Sigmoid colon (tissue), 7 donors: ENCODE measurements at regions of chr6 and their contacts with region 1.

Region 1: DNA sequence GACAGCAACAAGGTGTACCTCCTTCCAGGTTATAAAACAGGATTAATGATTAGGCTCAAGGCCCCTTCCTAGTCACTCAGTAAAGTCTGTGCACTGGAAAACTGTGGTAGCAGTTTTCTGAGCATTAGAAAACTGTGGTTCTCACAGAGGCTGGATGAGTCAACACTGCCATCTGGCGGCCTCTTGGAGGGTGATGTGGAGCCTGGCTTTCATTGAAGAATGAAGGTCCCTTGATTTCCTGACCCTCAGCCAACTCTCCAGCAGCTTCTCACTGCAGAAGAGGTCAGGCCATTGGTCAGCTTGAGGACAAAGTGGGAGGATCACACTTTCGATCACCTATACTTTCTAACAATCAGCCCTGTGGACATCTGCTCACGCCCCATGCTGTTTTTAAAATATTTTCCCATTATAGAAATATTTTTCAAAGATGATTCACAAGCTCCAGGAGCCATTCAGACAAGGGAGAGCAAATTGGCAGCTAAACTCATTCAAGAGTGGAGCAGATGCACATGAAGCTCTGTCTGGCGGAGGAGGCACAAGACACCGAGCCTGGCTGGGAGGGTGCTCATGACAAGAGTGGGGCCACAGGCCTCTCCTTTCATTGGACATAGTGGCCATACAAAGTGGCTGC is 23.2 kb downstream of the PSMB1 start:
- DNase-seq: peak; percentile 83
- H3K4me3 ChIP-seq: no peak overlapping the region
- H3K27ac ChIP-seq: no peak overlapping the region
- H3K4me1 ChIP-seq: no peaks in the 10 kb centered on the region
- H3K27me3 ChIP-seq: no peaks in the 10 kb centered on the region
- CTCF ChIP-seq: peak; percentile 18 to 88 (median 64)
- EP300 ChIP-seq: no peak
- POLR2A ChIP-seq: no peak

Region 2: GRCh38 chr6:169789982-169790927 is 739.7 kb before region 1 on chr6:
- intact Hi-C with region 1: loop called (anchors 2 kb)
- DNase-seq: peak; percentile 90
- H3K4me3 ChIP-seq: peak overlapping the region; percentile 18 to 52 (median 48)
- H3K27ac ChIP-seq: peak overlapping the region; percentile 76 to 85 (median 79)
- H3K4me1 ChIP-seq: peaks cover 0 to 15% (median 11%) of the 10 kb centered on the region in 4 donors
- H3K27me3 ChIP-seq: no peaks in the 10 kb centered on the region
- CTCF ChIP-seq: peak; percentile 87 to 98 (median 96)
- EP300 ChIP-seq: no peak
- POLR2A ChIP-seq: no peak

Region 3: GRCh38 chr6:169831450-169832246 is 698.3 kb before region 1 on chr6:
- intact Hi-C with region 1: loop called (anchors 5 kb)
- DNase-seq: peak; percentile 83
- H3K4me3 ChIP-seq: no peak overlapping the region
- H3K27ac ChIP-seq: no peak overlapping the region
- H3K4me1 ChIP-seq: peaks cover 0 to 6% (median 0%) of the 10 kb centered on the region in 4 donors
- H3K27me3 ChIP-seq: peaks cover 0 to 18% (median 0%) of the 10 kb centered on the region in 3 donors
- CTCF ChIP-seq: peak; percentile 76 to 92 (median 84)
- EP300 ChIP-seq: no peak
- POLR2A ChIP-seq: no peak

Region 4: DNA sequence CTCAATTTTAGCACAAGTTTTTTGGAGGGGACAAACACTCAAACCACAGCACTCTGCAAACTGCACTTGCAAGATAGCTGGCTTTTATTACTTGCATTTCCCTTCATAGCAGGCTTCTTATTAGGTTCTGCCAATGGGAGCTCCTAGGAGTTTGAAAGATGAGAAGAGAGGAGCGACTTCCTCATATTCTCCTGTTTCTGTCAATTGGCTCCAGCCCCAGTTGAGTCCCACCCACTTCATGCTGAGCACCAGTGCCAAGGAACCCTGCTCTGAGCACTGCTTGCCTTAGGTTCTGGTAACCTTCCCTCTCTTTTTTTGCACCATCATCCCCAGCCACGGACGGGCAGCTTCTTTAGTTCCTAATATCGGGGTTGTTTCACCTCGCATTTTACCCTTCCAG is 44.8 kb before region 1 on chr6:
- intact Hi-C with region 1: no loop called
- DNase-seq: no peak
- H3K4me3 ChIP-seq: no peak overlapping the region
- H3K27ac ChIP-seq: no peak overlapping the region
- H3K4me1 ChIP-seq: peaks cover 0 to 4% (median 0%) of the 10 kb centered on the region in 4 donors
- H3K27me3 ChIP-seq: no peaks in the 10 kb centered on the region
- CTCF ChIP-seq: no peak
- EP300 ChIP-seq: no peak
- POLR2A ChIP-seq: no peak